ENCODE measurements at regions of chr5 and their contacts with region 1.

Region 1: DNA sequence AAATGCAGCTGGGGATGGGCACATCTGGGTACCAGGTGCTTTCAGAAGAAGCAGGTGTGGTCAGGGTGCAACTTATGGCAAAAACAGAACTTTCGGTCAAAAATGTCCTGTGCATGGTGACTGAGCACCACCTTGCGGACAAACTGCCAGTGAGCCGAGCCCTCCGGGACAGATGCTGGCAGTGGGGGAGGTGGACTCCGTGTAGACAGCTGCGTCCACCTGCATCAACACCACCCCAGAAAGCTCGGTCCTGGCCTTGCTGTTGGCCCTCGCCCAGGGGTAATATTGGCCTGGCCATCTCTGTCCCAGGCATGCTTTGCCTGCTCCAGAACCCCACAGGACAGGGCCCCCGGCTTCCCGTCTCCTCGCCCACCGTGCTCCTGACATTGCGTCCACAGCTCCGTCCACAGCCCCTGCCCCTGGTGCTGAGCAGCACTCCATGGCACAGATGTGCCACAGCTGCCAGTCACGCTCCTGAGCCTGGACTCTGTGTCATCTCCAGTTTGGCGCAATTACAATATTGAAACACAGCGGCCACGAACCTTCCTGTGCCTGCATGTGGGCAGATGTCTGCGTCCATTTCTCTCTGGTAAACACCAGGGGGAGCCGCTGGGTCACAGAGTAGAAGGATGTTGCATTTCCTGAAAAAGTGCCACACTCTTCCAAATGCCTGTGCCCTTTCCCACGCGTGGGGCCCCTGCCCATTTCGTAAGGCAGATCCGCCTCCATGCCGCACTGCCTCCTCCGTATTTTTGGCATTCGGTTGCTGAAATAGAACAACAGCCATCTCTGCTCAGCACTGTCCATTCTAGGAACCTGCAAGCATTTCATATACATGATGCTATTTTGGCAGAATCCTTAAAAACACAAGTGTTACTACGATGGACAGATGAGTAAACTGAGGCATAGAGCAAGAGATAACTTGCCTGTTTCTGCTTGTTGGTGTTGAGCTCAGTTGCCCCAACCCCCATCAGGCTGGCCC is 33.4 kb upstream of the SLC6A19 start:
- DNase-seq: peak; percentile 79 to 95
- H3K4me3 ChIP-seq: no peak overlapping the region
- CTCF ChIP-seq: peak in 1 of 3 donors; percentile 14
- POLR2A ChIP-seq: no peak

Region 2: DNA sequence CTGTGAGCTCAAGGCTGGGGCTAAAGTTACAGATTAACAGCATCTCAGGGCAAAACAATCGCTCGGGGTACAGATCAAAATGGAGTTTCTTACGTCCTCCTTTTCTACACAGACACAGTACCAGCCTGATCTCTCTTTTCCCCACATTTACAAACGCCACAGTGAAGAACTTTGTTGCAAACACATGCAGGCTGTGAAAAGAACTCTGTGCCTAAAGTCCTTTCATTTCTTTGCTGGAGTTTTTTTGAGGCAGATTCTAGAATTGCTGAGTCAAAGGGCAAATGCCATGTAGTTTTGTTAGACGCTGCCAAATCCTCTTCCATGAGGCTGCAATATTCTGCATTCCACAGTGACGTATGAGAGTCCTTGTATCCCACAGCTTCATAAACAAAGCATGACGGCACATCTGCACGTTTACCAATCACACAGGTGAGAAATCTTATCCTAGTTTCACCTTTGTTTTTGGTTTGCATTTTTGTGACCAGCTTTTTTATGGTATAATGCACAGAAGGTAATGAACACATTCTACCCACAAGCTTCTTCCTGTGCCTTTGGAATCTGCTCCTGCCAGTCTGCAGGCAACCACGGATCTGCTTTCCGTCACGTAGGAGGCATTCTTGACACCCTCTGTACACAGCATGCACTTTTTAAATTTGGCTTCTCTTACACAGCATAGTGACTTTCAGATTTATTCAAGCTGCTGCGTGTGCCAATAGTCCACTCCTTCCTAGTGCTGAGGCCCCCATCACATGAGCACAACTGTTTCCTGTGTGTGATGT is 400.4 kb after region 1 on chr5:
- intact Hi-C with region 1: no loop called
- DNase-seq: no peak
- H3K4me3 ChIP-seq: no peak overlapping the region
- CTCF ChIP-seq: no peak
- POLR2A ChIP-seq: no peak

Region 3: DNA sequence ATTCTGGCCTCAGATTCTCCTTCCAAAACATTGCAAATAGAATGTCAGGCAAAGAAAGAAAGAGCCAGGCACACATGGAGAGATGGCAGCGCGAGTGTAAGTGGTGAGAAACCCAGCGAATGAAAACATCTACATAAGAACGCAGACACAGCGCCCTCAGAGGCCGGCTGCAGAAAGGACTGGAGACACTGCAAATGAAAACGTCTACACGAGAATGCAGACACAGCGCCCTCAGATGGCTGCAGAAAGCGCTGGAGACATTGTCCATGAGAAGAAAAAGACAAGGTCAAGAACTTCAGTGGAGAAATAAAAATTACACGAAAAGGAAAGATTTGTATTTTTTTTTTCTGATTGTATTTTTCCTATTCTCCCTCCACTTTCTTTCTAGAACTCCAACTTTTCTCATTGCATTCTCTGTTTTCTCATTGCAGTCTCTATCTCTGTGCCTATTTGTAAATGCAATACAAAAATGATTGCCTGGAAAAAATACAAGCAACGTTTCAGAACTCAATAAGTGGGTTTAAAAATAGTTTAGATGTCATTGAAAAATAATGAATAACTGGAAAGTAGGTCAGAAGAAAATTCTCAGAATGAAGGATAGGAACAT is 473.6 kb after region 1 on chr5:
- intact Hi-C with region 1: loop called (anchors 5 kb)
- DNase-seq: peak; percentile 86 to 95
- H3K4me3 ChIP-seq: no peak overlapping the region
- CTCF ChIP-seq: peak in 1 of 3 donors; percentile 78
- POLR2A ChIP-seq: no peak